B cell (primary cell): ENCODE measurements at regions of chr12 and their contacts with region 1.

Region 1: GRCh38 chr12:89352492-89353187 is at the start of gene DUSP6:
- DNase-seq: peak; percentile 88
- ATAC-seq: peak; percentile 64
- H3K4me3 ChIP-seq: peak within 1 kb of the TSS; percentile 63 to 94 (median 78)
- H3K4me3 Mint-ChIP-seq: peak within 1 kb of the TSS; percentile 97
- H3K27ac ChIP-seq: peak within 1 kb of the TSS; percentile 82 to 87
- H3K27ac Mint-ChIP-seq: peak within 1 kb of the TSS; percentile 96
- H3K4me1 ChIP-seq: peaks cover 44 to 52% of the 10 kb centered on the region in 2 donors
- H3K4me1 Mint-ChIP-seq: peaks cover 68% of the 10 kb centered on the region
- H3K27me3 ChIP-seq: no peaks in the 10 kb centered on the region
- H3K27me3 Mint-ChIP-seq: no peaks in the 10 kb centered on the region
- CTCF ChIP-seq: no peak
- total RNA-seq, gene DUSP6: 1.6 and 3.2 TPM in 2 replicates

Region 2: GRCh38 chr12:89166525-89166934 is 186.1 kb before region 1 on chr12:
- CTCF ChIA-PET with region 1: no interaction called
- POLR2A ChIA-PET with region 1: no interaction called
- intact Hi-C with region 1: loop called (anchors 1 kb)
- DNase-seq: peak; percentile 93
- ATAC-seq: peak; percentile 83
- H3K4me3 ChIP-seq: peak overlapping the region in 1 of 5 experiments; percentile 21
- H3K4me3 Mint-ChIP-seq: peak overlapping the region; percentile 67
- H3K27ac ChIP-seq: peak overlapping the region; percentile 90 to 98
- H3K27ac Mint-ChIP-seq: peak overlapping the region; percentile 90
- H3K4me1 ChIP-seq: peaks cover 56 to 63% of the 10 kb centered on the region in 2 donors
- H3K4me1 Mint-ChIP-seq: peaks cover 31% of the 10 kb centered on the region
- H3K27me3 ChIP-seq: no peaks in the 10 kb centered on the region
- H3K27me3 Mint-ChIP-seq: no peaks in the 10 kb centered on the region
- CTCF ChIP-seq: no peak